ENCODE measurements at regions of chr15 and their contacts with region 1.

Region 1: GRCh38 chr15:80804965-80805495 is 25.9 kb downstream of the CEMIP start:
- DNase-seq: peak; percentile 85
- ATAC-seq: peak; percentile 78
- H3K4me3 ChIP-seq: peak overlapping the region; percentile 9; the same call in 1 of the 2 replicates
- H3K27ac ChIP-seq: peak overlapping the region; percentile 92
- H3K4me1 ChIP-seq: peaks cover 54% of the 10 kb centered on the region
- H3K27me3 ChIP-seq: no peaks in the 10 kb centered on the region
- CTCF ChIP-seq: no peak

Region 2: GRCh38 chr15:80844011-80844755 is 39.2 kb after region 1 on chr15:
- CTCF ChIA-PET with region 1: no interaction called
- POLR2A ChIA-PET with region 1: no interaction called
- intact Hi-C with region 1: loop called (anchors 2 kb)
- DNase-seq: peak; percentile 86
- ATAC-seq: peak; percentile 55
- H3K4me3 ChIP-seq: no peak overlapping the region
- H3K27ac ChIP-seq: peak overlapping the region; percentile 89
- H3K4me1 ChIP-seq: peaks cover 79% of the 10 kb centered on the region
- H3K27me3 ChIP-seq: no peaks in the 10 kb centered on the region
- CTCF ChIP-seq: no peak

Region 3: GRCh38 chr15:80856809-80857377 is 51.9 kb after region 1 on chr15:
- CTCF ChIA-PET with region 1: no interaction called
- POLR2A ChIA-PET with region 1: no interaction called
- intact Hi-C with region 1: loop called (anchors 1 kb)
- DNase-seq: peak; percentile 82
- ATAC-seq: peak; percentile 82
- H3K4me3 ChIP-seq: no peak overlapping the region
- H3K27ac ChIP-seq: peak overlapping the region; percentile 84
- H3K4me1 ChIP-seq: peaks cover 48% of the 10 kb centered on the region
- H3K27me3 ChIP-seq: no peaks in the 10 kb centered on the region
- CTCF ChIP-seq: no peak

Measured in PC-3 (cell line).